Ascending aorta (tissue), 2 donors: ENCODE measurements at regions of chr9 and their contacts with region 1.

Region 1: GRCh38 chr9:2816476-2817141 is 27.3 kb downstream of the PUM3 start:
- DNase-seq: peak; percentile 12 to 88
- H3K4me3 ChIP-seq: no peak overlapping the region
- H3K27ac ChIP-seq: peak overlapping the region; percentile 84 to 93
- H3K4me1 ChIP-seq: peaks cover 6 to 18% of the 10 kb centered on the region in 2 donors
- H3K27me3 ChIP-seq: no peaks in the 10 kb centered on the region
- CTCF ChIP-seq: no peak

Region 2: DNA sequence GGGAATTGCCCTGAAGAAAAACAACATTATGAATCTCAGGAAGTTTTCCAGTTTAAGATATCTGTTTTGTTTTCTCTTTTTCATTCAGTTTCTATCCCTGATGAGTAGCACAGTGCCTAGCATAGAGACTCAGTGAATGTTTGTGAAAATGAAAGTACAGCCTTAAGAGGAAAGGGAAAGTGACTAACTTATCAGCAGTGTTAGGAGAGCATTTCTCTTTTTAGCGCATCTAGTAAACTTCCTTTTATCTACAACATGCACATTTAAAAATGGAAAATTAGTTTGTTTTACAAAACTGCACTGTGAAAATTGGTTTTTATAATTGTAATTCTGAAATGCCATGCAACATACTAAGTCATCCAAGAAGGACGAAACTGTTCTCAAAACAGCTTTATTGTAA is 690.7 kb before region 1 on chr9:
- intact Hi-C with region 1: loop called (anchors 5 kb)
- DNase-seq: no peak
- H3K4me3 ChIP-seq: peak overlapping the region; percentile 36 to 37
- H3K27ac ChIP-seq: peak overlapping the region; percentile 85 to 89
- H3K4me1 ChIP-seq: peaks cover 7 to 73% of the 10 kb centered on the region in 2 donors
- H3K27me3 ChIP-seq: no peaks in the 10 kb centered on the region
- CTCF ChIP-seq: no peak